ENCODE measurements at regions of chr3 and their contacts with region 1.

Region 1: GRCh38 chr3:138329127-138329983 is at the start of gene NME9:
- DNase-seq: peak; percentile 88
- H3K4me3 ChIP-seq: peak within 1 kb of the TSS; percentile 69
- H3K27ac ChIP-seq: no peak within 1 kb of the TSS
- H3K4me1 ChIP-seq: peaks cover 18% of the 10 kb centered on the region
- CTCF ChIP-seq: peak; percentile 87
- total RNA-seq, gene NME9: 0.54 TPM in 1 of 2 replicates, not detected in the other

Region 2: GRCh38 chr3:138068579-138069174 is 260.7 kb before region 1 on chr3:
- CTCF ChIA-PET with region 1: no interaction called
- POLR2A ChIA-PET with region 1: no interaction called
- intact Hi-C with region 1: loop called (anchors 5 kb)
- DNase-seq: peak; percentile 73
- H3K4me3 ChIP-seq: no peak overlapping the region
- H3K27ac ChIP-seq: no peak overlapping the region
- H3K4me1 ChIP-seq: no peaks in the 10 kb centered on the region
- CTCF ChIP-seq: peak; percentile 95

Region 3: GRCh38 chr3:138180375-138181029 is 148.9 kb before region 1 on chr3:
- CTCF ChIA-PET with region 1: no interaction called
- POLR2A ChIA-PET with region 1: interaction called, 4 read pairs
- intact Hi-C with region 1: loop called (anchors 1 kb)
- DNase-seq: peak; percentile 59
- H3K4me3 ChIP-seq: no peak overlapping the region
- H3K27ac ChIP-seq: no peak overlapping the region
- H3K4me1 ChIP-seq: no peaks in the 10 kb centered on the region
- CTCF ChIP-seq: peak; percentile 88

Region 4: GRCh38 chr3:138263104-138263503 is 66.3 kb before region 1 on chr3:
- CTCF ChIA-PET with region 1: no interaction called
- POLR2A ChIA-PET with region 1: no interaction called
- intact Hi-C with region 1: loop called (anchors 2 kb)
- DNase-seq: no peak
- H3K4me3 ChIP-seq: no peak overlapping the region
- H3K27ac ChIP-seq: no peak overlapping the region
- H3K4me1 ChIP-seq: no peaks in the 10 kb centered on the region
- CTCF ChIP-seq: peak; percentile 58

Measured in OCI-LY7 (cell line).